Activated T-helper 2 cell treated with anti-CD3 and anti-CD28 coated beads, Interferon-gamma antibody, Interleukin-2, Interleukin-4, amounts not matched to agents 10 μg/mL and 5 μg/mL and 100 μg/mL, durations not matched to agents 14 hours and 24 hours and 36 hours (primary cell): ENCODE measurements at regions of chr9 and their contacts with region 1.

Region 1: GRCh38 chr9:7298123-7298522 is 501.5 kb downstream of the DMAC1 start:
- DNase-seq: peak; percentile 27
- H3K4me3 Mint-ChIP-seq: no peak overlapping the region
- H3K27ac Mint-ChIP-seq: peak overlapping the region; percentile 44
- H3K4me1 Mint-ChIP-seq: peaks cover 21% of the 10 kb centered on the region
- H3K27me3 Mint-ChIP-seq: peaks cover 28% of the 10 kb centered on the region

Region 2: GRCh38 chr9:6827439-6827838 is 470.7 kb before region 1 on chr9:
- intact Hi-C with region 1: loop called (anchors 10 kb)
- DNase-seq: peak; percentile 27
- H3K4me3 Mint-ChIP-seq: no peak overlapping the region
- H3K27ac Mint-ChIP-seq: peak overlapping the region; percentile 65
- H3K4me1 Mint-ChIP-seq: peaks cover 19% of the 10 kb centered on the region
- H3K27me3 Mint-ChIP-seq: no peaks in the 10 kb centered on the region

Region 3: DNA sequence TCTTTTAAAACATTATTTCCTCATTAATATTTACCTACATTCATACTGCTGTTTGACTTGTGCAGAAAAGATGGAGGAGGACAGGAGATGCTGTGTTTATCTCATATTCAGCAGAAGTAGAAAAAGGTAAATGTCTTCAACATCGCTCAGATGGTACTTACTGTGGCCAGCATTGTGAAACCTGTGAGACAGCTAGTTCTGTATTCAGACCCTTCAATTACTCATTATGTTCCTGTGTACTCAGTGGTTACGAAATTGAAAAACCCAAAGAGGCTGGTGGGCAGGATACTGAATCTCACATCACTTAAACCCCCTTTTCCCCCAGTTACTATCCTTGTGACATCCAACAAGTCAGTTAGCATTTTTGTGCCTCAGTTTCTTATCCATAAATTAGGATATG is 324.4 kb before region 1 on chr9:
- intact Hi-C with region 1: loop called (anchors 1 kb)
- DNase-seq: no peak
- H3K4me3 Mint-ChIP-seq: no peak overlapping the region
- H3K27ac Mint-ChIP-seq: no peak overlapping the region
- H3K4me1 Mint-ChIP-seq: peaks cover 21% of the 10 kb centered on the region
- H3K27me3 Mint-ChIP-seq: no peaks in the 10 kb centered on the region

Region 4: GRCh38 chr9:7284517-7284916 is 13.6 kb before region 1 on chr9:
- intact Hi-C with region 1: loop called (anchors 1 kb)
- DNase-seq: no peak
- H3K4me3 Mint-ChIP-seq: no peak overlapping the region
- H3K27ac Mint-ChIP-seq: no peak overlapping the region
- H3K4me1 Mint-ChIP-seq: peaks cover 5% of the 10 kb centered on the region
- H3K27me3 Mint-ChIP-seq: peaks cover 23% of the 10 kb centered on the region

Region 5: DNA sequence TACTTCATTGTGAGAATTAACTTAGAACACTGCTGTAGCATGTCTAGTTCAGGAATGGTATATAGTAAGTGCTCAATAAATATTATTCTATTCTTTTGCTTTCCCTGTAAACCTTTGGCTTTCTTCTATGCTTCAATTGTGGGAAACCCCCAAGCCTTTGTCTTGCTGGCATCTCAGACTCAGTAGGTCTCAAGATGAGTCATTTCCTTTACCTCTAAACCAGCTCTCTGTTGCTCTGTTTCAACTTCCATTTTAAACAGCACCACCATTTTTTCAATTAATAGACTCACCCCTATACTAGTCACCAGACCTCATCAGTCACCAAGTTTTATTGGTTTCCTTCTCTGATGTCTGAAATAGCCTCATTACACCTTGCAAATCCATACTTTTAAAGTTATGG is 458.0 kb after region 1 on chr9:
- intact Hi-C with region 1: loop called (anchors 5 kb)
- DNase-seq: peak; percentile 18
- H3K4me3 Mint-ChIP-seq: no peak overlapping the region
- H3K27ac Mint-ChIP-seq: peak overlapping the region; percentile 36
- H3K4me1 Mint-ChIP-seq: peaks cover 26% of the 10 kb centered on the region
- H3K27me3 Mint-ChIP-seq: no peaks in the 10 kb centered on the region

Region 6: GRCh38 chr9:8436786-8437185 is 1138.7 kb after region 1 on chr9:
- intact Hi-C with region 1: loop called (anchors 1 kb)
- DNase-seq: no peak
- H3K4me3 Mint-ChIP-seq: no peak overlapping the region
- H3K27ac Mint-ChIP-seq: peak overlapping the region; percentile 88
- H3K4me1 Mint-ChIP-seq: peaks cover 17% of the 10 kb centered on the region
- H3K27me3 Mint-ChIP-seq: no peaks in the 10 kb centered on the region